ENCODE measurements at regions of chr12 and their contacts with region 1.

Region 1: GRCh38 chr12:5988659-5989116 is 43.6 kb upstream of the ANO2 start:
- DNase-seq: peak; percentile 4
- ATAC-seq: peak; percentile 100
- H3K4me3 ChIP-seq: no peak overlapping the region
- H3K27ac ChIP-seq: no peak overlapping the region
- H3K4me1 ChIP-seq: no peaks in the 10 kb centered on the region
- H3K27me3 ChIP-seq: peaks cover 0 to under 1% of the 10 kb centered on the region in 2 experiments; a peak in 1 of 4 replicates
- CTCF ChIP-seq: peak; percentile 96
- EP300 ChIP-seq: no peak
- POLR2A ChIP-seq: no peak
- RAD21 ChIP-seq: peak; percentile 88

Region 2: DNA sequence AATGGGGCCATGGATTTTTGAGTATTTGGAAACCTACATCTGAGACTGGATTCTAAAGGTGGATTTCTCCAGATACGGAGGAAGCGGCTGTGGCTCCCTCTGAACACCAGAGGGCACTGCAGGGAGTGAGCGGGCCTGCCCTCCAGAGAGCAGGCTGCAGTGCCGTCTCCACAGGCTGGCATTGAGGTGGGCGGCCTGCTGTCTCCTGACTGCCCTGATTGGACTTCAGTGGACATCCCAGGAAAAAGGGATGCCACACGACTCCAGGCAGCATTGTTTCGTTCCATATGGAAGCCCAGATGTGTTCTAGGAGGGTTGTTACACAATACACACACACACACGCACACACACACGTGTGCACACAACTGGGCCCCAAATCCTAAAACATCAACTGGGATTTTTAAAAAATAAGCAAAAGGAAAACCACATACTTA is 22.7 kb before region 1 on chr12:
- CTCF ChIA-PET with region 1: interaction called, 10 read pairs
- POLR2A ChIA-PET with region 1: no interaction called
- RAD21 ChIA-PET with region 1: interaction called, 4 read pairs
- SMC1A ChIA-PET with region 1: interaction called, 4 read pairs
- in situ Hi-C with region 1: no loop called
- intact Hi-C with region 1: no loop called
- DNase-seq: no peak
- ATAC-seq: peak; percentile 97
- H3K4me3 ChIP-seq: no peak overlapping the region
- H3K27ac ChIP-seq: no peak overlapping the region
- H3K4me1 ChIP-seq: no peaks in the 10 kb centered on the region
- H3K27me3 ChIP-seq: peaks cover 0 to 9% of the 10 kb centered on the region in 2 experiments
- CTCF ChIP-seq: peak; percentile 72 to 82 (median 77)
- EP300 ChIP-seq: no peak
- POLR2A ChIP-seq: no peak
- RAD21 ChIP-seq: peak; percentile 36; the same call in 1 of the 2 replicates

Region 3: DNA sequence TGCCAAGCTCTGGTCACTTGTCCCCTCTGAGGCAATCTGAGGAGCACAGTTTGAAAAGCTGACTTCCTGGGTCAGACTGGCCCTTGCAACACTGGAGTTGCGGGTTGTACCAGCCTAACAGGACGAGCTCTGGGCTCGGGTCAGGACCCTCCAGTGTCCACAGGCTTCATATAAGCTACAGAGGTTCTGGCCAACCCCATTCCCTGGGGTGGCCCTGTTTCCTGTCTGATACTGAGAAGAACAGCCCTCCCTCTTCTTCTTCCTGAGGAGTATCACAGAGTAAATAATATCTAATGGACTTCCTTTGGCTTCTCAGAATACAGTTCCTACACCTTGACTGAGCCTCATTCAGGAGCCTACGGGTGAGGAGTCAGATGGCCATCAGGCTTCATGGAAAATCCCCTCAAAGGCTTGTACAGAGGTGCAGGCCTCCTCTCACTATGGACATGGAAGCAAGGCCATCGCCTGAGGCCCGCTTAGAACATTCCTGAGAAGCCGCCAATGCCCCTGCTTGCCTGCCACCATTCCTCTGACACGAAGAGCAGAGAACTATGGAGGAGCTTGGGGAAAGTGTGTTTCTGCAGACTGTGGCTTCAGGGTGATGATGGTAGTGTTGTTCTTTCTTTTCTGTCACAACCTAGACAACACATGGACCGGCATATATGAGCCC is 15.1 kb before region 1 on chr12:
- CTCF ChIA-PET with region 1: interaction called, 5 read pairs
- POLR2A ChIA-PET with region 1: no interaction called
- RAD21 ChIA-PET with region 1: no interaction called
- SMC1A ChIA-PET with region 1: interaction called, 10 read pairs
- in situ Hi-C with region 1: no loop called
- intact Hi-C with region 1: no loop called
- DNase-seq: no peak
- ATAC-seq: no peak
- H3K4me3 ChIP-seq: no peak overlapping the region
- H3K27ac ChIP-seq: no peak overlapping the region
- H3K4me1 ChIP-seq: no peaks in the 10 kb centered on the region
- H3K27me3 ChIP-seq: peaks cover 1 to 16% of the 10 kb centered on the region in 2 experiments
- CTCF ChIP-seq: no peak
- EP300 ChIP-seq: no peak
- POLR2A ChIP-seq: no peak
- RAD21 ChIP-seq: no peak

Region 4: DNA sequence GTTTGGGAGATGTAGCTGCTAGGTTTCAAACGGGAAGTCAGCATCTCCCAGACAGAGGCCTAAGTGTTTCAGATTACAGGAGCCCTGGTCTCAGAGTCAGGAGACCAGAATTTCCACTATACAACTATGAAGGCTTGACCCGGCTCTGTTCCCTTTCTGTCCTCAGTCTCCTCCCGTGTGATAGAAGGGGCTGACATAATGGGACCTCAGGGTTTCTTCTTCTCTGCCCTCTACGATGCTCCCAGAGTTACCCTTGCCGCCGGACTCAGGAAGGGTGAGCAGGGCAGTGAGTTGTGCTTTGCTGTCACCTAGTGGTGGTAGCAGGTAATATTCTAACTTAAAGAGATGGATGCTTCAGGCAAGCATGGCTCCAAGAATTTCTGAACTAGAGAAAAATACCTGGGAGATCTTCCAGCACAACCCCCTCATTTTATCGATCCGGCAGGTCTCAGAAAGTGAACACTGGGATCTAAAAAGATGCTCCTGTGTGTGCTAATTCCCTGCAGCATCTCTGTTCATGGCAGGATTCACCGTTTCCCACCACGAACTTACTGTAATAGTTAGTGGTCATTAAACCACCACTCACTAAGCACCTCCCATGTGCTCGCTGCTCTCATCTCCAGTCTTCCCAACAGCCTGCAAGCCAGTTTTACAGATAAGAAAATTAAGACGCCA is 51.3 kb after region 1 on chr12:
- CTCF ChIA-PET with region 1: interaction called, 256 read pairs
- POLR2A ChIA-PET with region 1: no interaction called
- RAD21 ChIA-PET with region 1: interaction called, 71 read pairs
- SMC1A ChIA-PET with region 1: interaction called, 65 read pairs
- in situ Hi-C with region 1: loop called (anchors 5 kb)
- intact Hi-C with region 1: loop called (anchors 1 kb)
- DNase-seq: no peak
- ATAC-seq: peak; percentile 92
- H3K4me3 ChIP-seq: no peak overlapping the region
- H3K27ac ChIP-seq: no peak overlapping the region
- H3K4me1 ChIP-seq: no peaks in the 10 kb centered on the region
- H3K27me3 ChIP-seq: no peaks in the 10 kb centered on the region; a peak in 2 of 4 replicates
- CTCF ChIP-seq: peak; percentile 89 to 94 (median 93)
- EP300 ChIP-seq: no peak
- POLR2A ChIP-seq: no peak
- RAD21 ChIP-seq: peak; percentile 93

Region 5: DNA sequence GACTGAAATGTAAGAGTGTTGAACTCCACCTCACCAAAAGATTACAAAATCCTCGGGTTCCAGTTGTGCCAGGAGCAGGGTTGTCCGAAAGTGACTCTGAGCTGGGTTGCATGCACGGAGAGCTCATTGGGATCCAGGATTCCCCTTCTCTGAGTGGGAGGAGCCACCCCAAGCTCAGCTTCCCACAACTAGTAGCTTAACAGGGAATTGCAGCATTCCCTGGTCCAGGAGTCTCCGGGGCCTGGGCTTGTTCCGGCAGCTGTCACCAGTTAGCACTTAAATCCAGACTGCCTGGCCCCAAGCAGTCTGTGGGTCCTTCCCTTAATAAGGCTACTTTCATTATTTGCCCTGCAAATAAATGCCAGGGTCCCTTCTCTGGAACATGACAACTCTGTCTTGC is 261.7 kb after region 1 on chr12:
- CTCF ChIA-PET with region 1: no interaction called
- POLR2A ChIA-PET with region 1: no interaction called
- RAD21 ChIA-PET with region 1: no interaction called
- SMC1A ChIA-PET with region 1: no interaction called
- in situ Hi-C with region 1: no loop called
- intact Hi-C with region 1: no loop called
- DNase-seq: no peak
- ATAC-seq: no peak
- H3K4me3 ChIP-seq: no peak overlapping the region
- H3K27ac ChIP-seq: no peak overlapping the region
- H3K4me1 ChIP-seq: no peaks in the 10 kb centered on the region
- H3K27me3 ChIP-seq: peaks cover 0 to 6% of the 10 kb centered on the region in 2 experiments; a peak in 2 of 4 replicates
- CTCF ChIP-seq: no peak
- EP300 ChIP-seq: no peak
- POLR2A ChIP-seq: no peak
- RAD21 ChIP-seq: no peak

Measured in GM12878 (cell line).